AG04450 (cell line): ENCODE measurements at regions of chr3 and their contacts with region 1.

Region 1: GRCh38 chr3:157606011-157606851 is 103.0 kb upstream of the VEPH1 start:
- DNase-seq: peak; percentile 39
- H3K4me3 ChIP-seq: no peak overlapping the region
- H3K27ac ChIP-seq: no peak overlapping the region
- H3K27me3 ChIP-seq: peaks cover 4% of the 10 kb centered on the region
- CTCF ChIP-seq: peak; percentile 91

Region 2: GRCh38 chr3:157572559-157573270 is 33.5 kb before region 1 on chr3:
- CTCF ChIA-PET with region 1: interaction called, 32 read pairs
- POLR2A ChIA-PET with region 1: no interaction called
- DNase-seq: no peak
- H3K4me3 ChIP-seq: no peak overlapping the region
- H3K27ac ChIP-seq: no peak overlapping the region
- H3K27me3 ChIP-seq: no peaks in the 10 kb centered on the region
- CTCF ChIP-seq: peak; percentile 82

Region 3: GRCh38 chr3:157618075-157618760 is 12.0 kb after region 1 on chr3:
- CTCF ChIA-PET with region 1: interaction called, 42 read pairs
- POLR2A ChIA-PET with region 1: no interaction called
- DNase-seq: peak; percentile 18
- H3K4me3 ChIP-seq: no peak overlapping the region
- H3K27ac ChIP-seq: no peak overlapping the region
- H3K27me3 ChIP-seq: peaks cover 8% of the 10 kb centered on the region
- CTCF ChIP-seq: peak; percentile 68

Region 4: GRCh38 chr3:158434412-158435038 is 828.3 kb after region 1 on chr3:
- CTCF ChIA-PET with region 1: interaction called, 51 read pairs
- POLR2A ChIA-PET with region 1: no interaction called
- DNase-seq: peak; percentile 21
- H3K4me3 ChIP-seq: no peak overlapping the region
- H3K27ac ChIP-seq: no peak overlapping the region
- H3K27me3 ChIP-seq: no peaks in the 10 kb centered on the region
- CTCF ChIP-seq: peak; percentile 83

Region 5: DNA sequence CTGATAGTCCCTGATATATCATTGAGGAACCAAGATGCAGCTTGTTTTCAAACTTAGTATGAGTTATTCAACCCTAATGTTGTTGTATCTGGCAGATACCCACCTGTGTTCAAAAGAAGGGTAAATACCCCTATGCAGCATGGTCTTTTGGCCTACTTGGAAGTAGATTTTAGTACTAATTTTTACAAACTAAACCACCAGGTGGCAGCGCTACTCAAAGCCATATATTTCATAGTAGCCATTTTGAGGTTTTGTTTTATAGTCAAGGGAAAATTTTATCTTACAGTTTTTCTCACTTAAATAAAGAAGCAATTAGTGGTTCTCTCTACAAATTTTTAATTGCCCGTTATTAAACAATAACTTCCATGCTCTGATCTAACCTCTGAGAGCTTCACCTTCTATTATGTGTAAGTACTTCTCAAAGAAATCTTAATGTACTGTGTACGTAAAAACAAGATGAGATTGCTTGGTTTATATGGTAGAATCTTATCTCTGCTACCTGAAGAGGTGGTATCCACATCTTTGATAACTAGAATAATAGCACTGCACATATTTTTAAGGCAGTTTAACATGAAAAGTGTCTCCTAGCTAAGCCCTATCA is 933.3 kb after region 1 on chr3:
- CTCF ChIA-PET with region 1: interaction called, 21 read pairs
- POLR2A ChIA-PET with region 1: no interaction called
- DNase-seq: peak; percentile 16
- H3K4me3 ChIP-seq: no peak overlapping the region
- H3K27ac ChIP-seq: no peak overlapping the region
- H3K27me3 ChIP-seq: no peaks in the 10 kb centered on the region
- CTCF ChIP-seq: peak; percentile 60